ENCODE measurements at regions of chr17 and their contacts with region 1.

Region 1: GRCh38 chr17:59837308-59838051 is 55.3 kb downstream of the TUBD1 start:
- DNase-seq: peak; percentile 64
- ATAC-seq: peak; percentile 92 to 93

Region 2: GRCh38 chr17:59505610-59506276 is 331.7 kb before region 1 on chr17:
- intact Hi-C with region 1: no loop called
- DNase-seq: no peak
- ATAC-seq: peak; percentile 23 to 62

Region 3: GRCh38 chr17:59753522-59754467 is 83.7 kb before region 1 on chr17:
- intact Hi-C with region 1: loop called in 1 of 2 experiments (anchors 5 kb)
- DNase-seq: no peak
- ATAC-seq: peak; percentile 87 to 92

Region 4: GRCh38 chr17:60127068-60128054 is 289.9 kb after region 1 on chr17:
- intact Hi-C with region 1: no loop called
- DNase-seq: no peak
- ATAC-seq: no peak